ENCODE measurements at regions of chr11 and their contacts with region 1.

Region 1: DNA sequence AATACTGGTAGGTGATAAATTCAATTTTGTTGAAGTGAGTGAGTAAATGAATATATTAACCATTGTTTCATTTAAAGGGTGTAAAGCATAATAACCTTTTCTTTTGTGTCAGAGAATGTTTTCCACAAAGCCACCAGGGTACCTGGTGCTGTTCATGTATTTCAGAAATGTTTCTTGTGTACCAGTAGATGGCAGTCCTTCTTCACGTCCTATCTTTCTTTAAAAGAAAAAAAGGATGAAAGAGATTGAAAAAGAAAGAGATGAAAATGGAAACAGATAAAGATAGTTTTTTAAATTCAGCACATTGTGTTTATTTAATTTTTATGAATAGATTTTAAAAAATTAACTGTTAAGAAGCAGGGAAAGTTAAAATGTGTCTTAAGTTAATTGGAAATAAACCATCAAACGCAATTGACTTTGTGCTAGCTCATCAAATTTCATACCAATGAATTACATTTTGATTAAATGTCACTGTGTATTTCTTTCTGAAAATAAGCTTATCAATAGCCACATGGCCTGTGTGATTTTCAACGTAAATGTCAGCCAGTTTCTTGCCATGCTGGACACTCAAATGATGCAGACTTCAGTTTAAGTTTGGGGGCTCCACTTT is 65.5 kb upstream of the CHORDC1 start:
- DNase-seq: no peak
- ATAC-seq: no peak

Region 2: DNA sequence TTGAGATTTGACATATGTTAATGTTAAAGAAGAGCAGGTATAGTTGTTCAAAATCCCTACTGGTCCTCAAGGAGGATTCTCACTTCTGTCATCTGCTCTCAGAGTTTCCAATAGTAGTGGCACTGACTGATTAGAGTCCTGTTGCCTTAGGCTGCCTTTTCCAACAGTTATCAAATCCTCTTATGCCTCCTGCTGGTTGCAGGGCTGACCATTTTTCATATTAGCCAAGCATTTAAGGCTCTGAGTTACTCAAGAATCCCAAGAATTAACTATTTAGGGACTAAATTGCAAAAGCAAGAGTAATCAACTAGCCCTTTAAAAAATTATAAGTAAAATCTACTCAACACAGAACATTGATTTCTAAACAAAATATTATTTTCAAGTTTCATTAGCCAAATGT is 146.5 kb after region 1 on chr11:
- intact Hi-C with region 1: loop called (anchors 10 kb)
- DNase-seq: no peak
- ATAC-seq: no peak

Region 3: GRCh38 chr11:90453525-90453924 is 165.2 kb after region 1 on chr11:
- intact Hi-C with region 1: loop called (anchors 5 kb)
- DNase-seq: no peak
- ATAC-seq: no peak

Measured in left ventricle myocardium superior (tissue), 1 donor.